ENCODE measurements at regions of chr4 and their contacts with region 1.

Region 1: GRCh38 chr4:54233277-54233696 is 4.2 kb downstream of the PDGFRA start:
- DNase-seq: peak in 1 of 2 donors; percentile 91
- H3K4me3 ChIP-seq: peak overlapping the region; percentile 71 to 81
- H3K27ac ChIP-seq: peak overlapping the region; percentile 87 to 93
- H3K4me1 ChIP-seq: peaks cover 0 to 4% of the 10 kb centered on the region in 2 donors
- H3K27me3 ChIP-seq: no peaks in the 10 kb centered on the region
- CTCF ChIP-seq: peak; percentile 65 to 88 (median 70)

Region 2: DNA sequence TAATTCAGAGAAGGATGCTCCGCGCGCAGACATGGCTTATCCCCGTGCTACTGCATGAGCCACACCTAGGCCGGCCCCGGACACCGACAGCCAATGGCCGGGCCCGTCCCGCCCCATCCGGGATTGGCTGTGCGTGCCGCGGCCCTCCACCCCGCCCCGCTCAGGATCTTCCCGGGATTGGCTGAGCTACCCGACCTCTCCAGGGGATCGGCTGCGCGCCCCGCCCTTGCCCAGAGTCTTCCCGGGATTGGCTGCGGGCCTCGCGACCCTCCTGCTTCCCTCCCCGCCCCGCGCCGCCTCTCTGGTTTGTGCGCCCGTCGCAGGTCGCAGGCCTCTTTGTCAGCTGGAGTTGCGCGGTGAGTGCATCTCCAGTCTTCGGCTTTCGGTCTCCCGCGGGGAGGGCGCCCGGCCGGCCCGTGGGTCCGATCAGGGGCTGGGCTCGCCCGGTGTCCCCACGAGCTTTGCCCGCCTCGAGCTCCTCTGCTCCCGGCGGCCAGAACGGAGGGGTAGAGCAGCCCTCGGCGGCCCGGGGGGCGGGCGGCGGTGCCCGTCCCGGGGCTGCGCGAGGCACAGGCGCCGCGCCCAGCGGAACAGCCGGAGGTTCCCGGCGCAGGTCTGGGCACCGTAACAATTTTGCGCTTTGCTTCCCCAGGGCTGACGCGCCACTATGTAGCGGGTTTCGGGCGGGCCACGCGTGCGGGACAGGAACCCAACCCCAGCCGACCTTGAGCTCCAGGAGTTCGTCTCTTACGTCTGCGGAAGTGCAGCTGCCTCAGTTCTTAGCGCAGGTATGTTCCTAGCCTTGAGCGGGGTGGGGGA is 1520.9 kb before region 1 on chr4:
- intact Hi-C with region 1: loop called (anchors 5 kb)
- DNase-seq: peak; percentile 93 to 99
- H3K4me3 ChIP-seq: peak overlapping the region; percentile 85 to 86
- H3K27ac ChIP-seq: peak overlapping the region; percentile 91 to 93
- H3K4me1 ChIP-seq: peaks cover 9 to 16% of the 10 kb centered on the region in 2 donors
- H3K27me3 ChIP-seq: no peaks in the 10 kb centered on the region
- CTCF ChIP-seq: no peak

Region 3: GRCh38 chr4:53196882-53197771 is 1036.2 kb before region 1 on chr4:
- intact Hi-C with region 1: loop called (anchors 2 kb)
- DNase-seq: no peak
- H3K4me3 ChIP-seq: peak overlapping the region in 1 of 2 donors; percentile 13
- H3K27ac ChIP-seq: no peak overlapping the region
- H3K4me1 ChIP-seq: no peaks in the 10 kb centered on the region
- H3K27me3 ChIP-seq: no peaks in the 10 kb centered on the region
- CTCF ChIP-seq: peak; percentile 66 to 77 (median 72)

Region 4: GRCh38 chr4:53490965-53491622 is 742.2 kb before region 1 on chr4:
- intact Hi-C with region 1: loop called (anchors 5 kb)
- DNase-seq: peak in 1 of 2 donors; percentile 84
- H3K4me3 ChIP-seq: no peak overlapping the region
- H3K27ac ChIP-seq: peak overlapping the region in 1 of 2 donors; percentile 7
- H3K4me1 ChIP-seq: no peaks in the 10 kb centered on the region
- H3K27me3 ChIP-seq: no peaks in the 10 kb centered on the region
- CTCF ChIP-seq: peak; percentile 51 to 65 (median 60)

Region 5: DNA sequence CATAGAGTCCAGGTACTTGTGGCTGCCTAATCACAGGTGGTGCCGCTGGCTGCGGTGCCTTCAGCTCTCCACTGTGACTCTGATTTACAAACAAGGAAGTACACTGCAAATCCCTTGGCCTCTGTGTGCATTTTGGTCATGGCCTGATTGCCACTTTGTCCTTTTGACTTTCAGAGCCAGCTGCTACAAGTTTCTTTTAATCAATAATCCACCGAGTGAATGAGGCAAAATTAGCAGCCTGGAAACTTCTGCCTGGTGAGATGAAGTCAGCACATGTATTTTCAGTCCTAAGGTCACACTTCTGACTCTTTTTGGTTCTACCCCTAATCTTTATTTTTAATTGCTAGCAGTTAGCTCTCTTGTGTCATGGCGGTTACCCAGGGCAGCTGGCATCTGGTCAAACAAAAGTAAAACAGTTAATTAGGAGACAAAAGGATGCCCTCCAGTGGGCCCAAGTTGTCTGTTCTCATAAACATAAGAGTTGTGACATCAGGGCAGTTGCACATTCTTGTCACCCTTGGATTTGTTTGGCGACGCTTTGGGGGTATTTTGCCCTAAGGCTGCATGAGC is 579.7 kb before region 1 on chr4:
- intact Hi-C with region 1: loop called (anchors 5 kb)
- DNase-seq: no peak
- H3K4me3 ChIP-seq: no peak overlapping the region
- H3K27ac ChIP-seq: no peak overlapping the region
- H3K4me1 ChIP-seq: peaks cover 0 to 9% of the 10 kb centered on the region in 2 donors
- H3K27me3 ChIP-seq: no peaks in the 10 kb centered on the region
- CTCF ChIP-seq: no peak

Region 6: DNA sequence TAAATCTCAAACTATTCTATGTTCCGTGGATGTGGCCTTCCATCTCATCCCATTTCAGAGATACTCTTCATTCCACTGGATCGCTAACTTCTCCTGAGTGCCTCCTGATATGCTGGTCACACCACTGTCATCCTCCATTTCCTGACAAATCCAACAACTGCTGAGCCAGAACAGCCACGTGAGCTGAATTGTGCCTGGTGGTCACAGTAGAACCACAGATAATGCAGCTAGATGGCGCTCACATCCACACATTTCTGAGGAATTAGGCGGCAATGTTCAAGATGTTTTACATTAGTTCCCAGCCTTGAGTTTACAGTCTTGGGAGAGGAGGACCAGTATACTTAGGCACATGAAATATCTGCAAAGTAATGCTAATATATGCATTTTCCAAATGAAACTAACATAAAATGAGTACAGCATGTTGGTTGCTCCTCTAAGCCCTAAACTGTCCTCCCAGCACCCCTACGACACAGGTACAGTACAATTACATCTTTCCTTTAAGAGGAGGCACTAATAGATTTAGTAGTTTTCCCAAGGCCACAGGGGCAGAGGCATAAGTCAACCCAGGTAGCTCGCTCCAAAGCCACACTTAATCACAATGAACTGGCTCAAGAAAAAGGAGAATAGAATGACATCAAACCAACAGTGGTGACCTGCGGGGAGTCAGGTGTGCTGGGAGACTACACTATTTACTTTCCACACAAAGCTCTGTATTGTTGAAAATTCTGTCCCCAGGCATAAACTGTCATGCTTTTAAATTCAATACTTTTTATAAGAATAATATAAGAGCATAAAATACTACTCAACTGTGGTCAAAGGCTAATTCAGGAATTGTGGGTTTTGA is 303.1 kb before region 1 on chr4:
- intact Hi-C with region 1: loop called (anchors 5 kb)
- DNase-seq: peak; percentile 23 to 90
- H3K4me3 ChIP-seq: no peak overlapping the region
- H3K27ac ChIP-seq: no peak overlapping the region
- H3K4me1 ChIP-seq: peaks cover 0 to 11% of the 10 kb centered on the region in 2 donors
- H3K27me3 ChIP-seq: no peaks in the 10 kb centered on the region
- CTCF ChIP-seq: peak; percentile 62 to 86 (median 62)

Measured in ascending aorta (tissue), 2 donors.